ENCODE measurements at regions of chr2 and their contacts with region 1.

Region 1: DNA sequence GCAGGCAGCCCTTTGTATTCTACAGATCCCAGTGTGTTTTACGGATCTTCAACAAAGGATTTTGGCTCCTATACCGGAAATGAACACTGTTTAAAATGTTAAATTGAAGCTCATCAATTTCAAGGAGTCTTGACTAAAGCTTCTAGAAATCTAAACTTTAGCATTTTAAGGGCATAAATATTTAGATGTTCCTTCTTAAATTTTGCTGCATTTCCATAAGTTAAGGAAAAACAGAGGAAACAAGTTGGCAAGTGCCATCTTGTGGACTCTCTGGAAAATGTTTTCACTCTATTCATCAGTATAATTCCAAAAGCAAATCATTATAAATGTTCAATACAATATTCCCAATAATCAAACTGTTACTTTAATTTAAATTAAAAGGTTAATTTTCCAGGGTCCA is 19.6 kb downstream of the CHN1 start:
- DNase-seq: no peak
- H3K4me3 ChIP-seq: no peak overlapping the region
- H3K4me3 Mint-ChIP-seq: no peak overlapping the region
- H3K27ac Mint-ChIP-seq: no peak overlapping the region
- H3K4me1 ChIP-seq: no peaks in the 10 kb centered on the region
- H3K4me1 Mint-ChIP-seq: no peaks in the 10 kb centered on the region
- H3K27me3 ChIP-seq: no peaks in the 10 kb centered on the region
- H3K27me3 Mint-ChIP-seq: peaks cover 2% of the 10 kb centered on the region
- CTCF ChIP-seq: peak; percentile 54

Region 2: GRCh38 chr2:174748948-174749347 is 236.7 kb before region 1 on chr2:
- CTCF ChIA-PET with region 1: interaction called, 13 read pairs
- POLR2A ChIA-PET with region 1: no interaction called
- intact Hi-C with region 1: loop called (anchors 1 kb)
- DNase-seq: peak; percentile 81 to 84
- H3K4me3 ChIP-seq: no peak overlapping the region
- H3K4me3 Mint-ChIP-seq: no peak overlapping the region
- H3K27ac Mint-ChIP-seq: peak overlapping the region; percentile 63
- H3K4me1 ChIP-seq: peaks cover 8% of the 10 kb centered on the region
- H3K4me1 Mint-ChIP-seq: no peaks in the 10 kb centered on the region
- H3K27me3 ChIP-seq: no peaks in the 10 kb centered on the region
- H3K27me3 Mint-ChIP-seq: no peaks in the 10 kb centered on the region
- CTCF ChIP-seq: peak; percentile 82 to 86

Measured in Caco-2 (cell line).